ENCODE measurements at regions of chr1 and their contacts with region 1.

Region 1: DNA sequence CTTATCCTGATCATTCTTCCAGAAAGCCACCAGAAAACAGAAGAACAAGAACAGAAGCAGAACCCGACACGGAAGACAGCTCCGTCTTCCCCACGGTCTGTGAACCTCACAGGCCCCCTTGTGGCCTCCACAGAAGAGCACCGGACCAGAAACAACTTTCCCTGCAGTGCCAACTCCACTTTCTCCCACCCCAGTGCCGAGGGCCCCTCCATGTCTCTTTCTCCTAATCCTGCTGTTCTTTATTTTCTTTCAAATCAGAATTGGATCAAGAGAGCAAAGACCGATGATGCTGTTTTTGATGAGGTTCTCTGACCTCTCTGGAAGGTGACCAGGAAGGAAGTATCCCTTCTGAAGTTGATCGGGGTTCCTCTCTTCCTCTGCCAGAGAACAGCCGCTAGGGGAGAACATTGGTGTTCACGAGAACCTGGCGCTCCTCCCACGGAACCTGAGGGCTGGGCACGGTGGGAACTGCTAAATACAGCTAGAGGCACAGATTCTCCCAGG is 58.9 kb upstream of the CTTNBP2NL start:
- DNase-seq: peak; percentile 44
- ATAC-seq: peak; percentile 80
- H3K4me3 Mint-ChIP-seq: no peak overlapping the region
- H3K27ac Mint-ChIP-seq: no peak overlapping the region
- H3K4me1 Mint-ChIP-seq: no peaks in the 10 kb centered on the region; the same call in 1 of the 2 replicates
- H3K27me3 Mint-ChIP-seq: no peaks in the 10 kb centered on the region; the same call in 1 of the 2 replicates
- CTCF ChIP-seq: peak; percentile 39

Region 2: GRCh38 chr1:112312315-112312714 is 24.8 kb before region 1 on chr1:
- CTCF ChIA-PET with region 1: interaction called, 15 read pairs
- POLR2A ChIA-PET with region 1: no interaction called
- DNase-seq: no peak
- ATAC-seq: peak; percentile 43; the same call in 1 of the 2 replicates
- H3K4me3 Mint-ChIP-seq: no peak overlapping the region
- H3K27ac Mint-ChIP-seq: no peak overlapping the region
- H3K4me1 Mint-ChIP-seq: peaks cover 27% of the 10 kb centered on the region
- H3K27me3 Mint-ChIP-seq: no peaks in the 10 kb centered on the region; the same call in 1 of the 2 replicates
- CTCF ChIP-seq: no peak

Region 3: GRCh38 chr1:112358798-112359408 is 21.8 kb after region 1 on chr1:
- CTCF ChIA-PET with region 1: interaction called, 10 read pairs
- POLR2A ChIA-PET with region 1: no interaction called
- DNase-seq: peak; percentile 77
- ATAC-seq: peak; percentile 97
- H3K4me3 Mint-ChIP-seq: no peak overlapping the region
- H3K27ac Mint-ChIP-seq: no peak overlapping the region
- H3K4me1 Mint-ChIP-seq: peaks cover 18% of the 10 kb centered on the region
- H3K27me3 Mint-ChIP-seq: peaks cover 8% of the 10 kb centered on the region
- CTCF ChIP-seq: peak; percentile 60